ENCODE measurements at regions of chrX and their contacts with region 1.

Region 1: DNA sequence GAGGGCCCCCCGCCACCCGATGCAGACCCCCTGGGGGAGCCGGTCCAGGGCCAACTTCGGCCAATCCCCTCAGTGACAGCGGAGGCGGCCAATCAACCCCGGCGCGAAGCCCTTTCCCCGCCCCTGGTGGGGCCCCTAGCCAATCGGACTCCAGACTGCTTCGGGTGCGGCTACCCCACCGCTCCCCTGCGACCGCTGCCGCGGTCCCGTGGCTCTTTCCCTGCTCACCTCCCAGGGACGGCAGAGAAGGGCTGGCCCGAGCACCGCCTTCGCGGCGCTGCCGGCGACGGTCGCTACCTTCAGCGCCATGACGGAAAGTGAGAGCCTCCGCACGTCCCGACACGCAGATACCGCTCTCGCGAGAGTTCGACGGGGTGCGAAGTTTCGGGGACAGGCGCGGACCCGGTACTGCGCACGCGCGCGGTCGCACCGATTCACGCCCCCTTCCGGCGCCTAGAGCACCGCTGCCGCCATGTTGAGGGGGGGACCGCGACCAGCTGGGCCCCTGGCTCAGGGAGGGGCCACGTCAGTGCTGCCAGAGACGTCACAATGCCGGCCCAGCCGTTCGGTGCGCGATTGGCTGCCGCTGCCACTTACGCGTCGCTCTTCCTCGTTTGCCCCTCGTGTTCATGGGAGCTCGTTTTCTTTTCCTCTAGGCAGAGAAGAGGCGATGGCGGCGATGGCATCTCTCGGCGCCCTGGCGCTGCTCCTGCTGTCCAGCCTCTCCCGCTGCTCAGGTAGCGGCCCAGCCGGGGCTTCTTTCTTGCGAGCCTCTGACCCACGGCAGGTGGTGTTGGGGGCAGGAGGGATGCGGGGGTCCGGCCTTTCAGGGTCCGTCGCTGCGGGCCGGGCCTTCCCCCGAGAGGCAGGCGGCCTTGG is at the starts of genes IDH3G and SSR4:
- DNase-seq: peak; percentile 84
- ATAC-seq: peak; percentile 91
- H3K4me3 Mint-ChIP-seq: peak within 1 kb of the TSS; percentile 94
- H3K27ac Mint-ChIP-seq: peak within 1 kb of the TSS; percentile 92
- H3K4me1 Mint-ChIP-seq: peaks cover 19% of the 10 kb centered on the region
- H3K27me3 Mint-ChIP-seq: no peaks in the 10 kb centered on the region
- CTCF ChIP-seq: no peak
- total RNA-seq, gene IDH3G: 58.5 and 60.3 TPM in 2 replicates
- total RNA-seq, gene SSR4: 160 and 175 TPM in 2 replicates

Region 2: DNA sequence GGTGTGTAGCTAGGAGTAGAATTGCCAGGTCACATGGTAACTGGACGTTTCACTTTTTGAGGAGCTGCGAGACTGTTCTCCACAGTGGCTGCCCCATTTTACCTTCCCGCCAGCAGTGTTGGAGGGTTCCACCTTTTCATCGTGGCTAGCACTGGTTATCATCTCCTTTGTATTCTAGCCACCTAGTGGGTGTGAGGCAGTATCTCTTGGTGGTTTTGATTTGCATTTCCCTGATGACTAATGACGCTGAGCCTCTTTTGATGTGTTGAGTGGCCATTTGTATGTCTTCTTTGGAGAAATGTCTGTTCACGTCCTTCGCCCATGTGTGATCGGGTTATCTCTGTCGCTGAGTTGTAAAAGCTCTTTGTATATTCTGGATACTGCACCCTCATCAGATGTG is 59.0 kb before region 1 on chrX:
- CTCF ChIA-PET with region 1: no interaction called
- POLR2A ChIA-PET with region 1: interaction called, 10 read pairs
- intact Hi-C with region 1: no loop called
- DNase-seq: no peak
- ATAC-seq: peak; percentile 79
- H3K4me3 Mint-ChIP-seq: no peak overlapping the region
- H3K27ac Mint-ChIP-seq: no peak overlapping the region
- H3K4me1 Mint-ChIP-seq: peaks cover 27% of the 10 kb centered on the region
- H3K27me3 Mint-ChIP-seq: no peaks in the 10 kb centered on the region
- CTCF ChIP-seq: no peak